Caco-2 (cell line): ENCODE measurements at regions of chr9 and their contacts with region 1.

Region 1: DNA sequence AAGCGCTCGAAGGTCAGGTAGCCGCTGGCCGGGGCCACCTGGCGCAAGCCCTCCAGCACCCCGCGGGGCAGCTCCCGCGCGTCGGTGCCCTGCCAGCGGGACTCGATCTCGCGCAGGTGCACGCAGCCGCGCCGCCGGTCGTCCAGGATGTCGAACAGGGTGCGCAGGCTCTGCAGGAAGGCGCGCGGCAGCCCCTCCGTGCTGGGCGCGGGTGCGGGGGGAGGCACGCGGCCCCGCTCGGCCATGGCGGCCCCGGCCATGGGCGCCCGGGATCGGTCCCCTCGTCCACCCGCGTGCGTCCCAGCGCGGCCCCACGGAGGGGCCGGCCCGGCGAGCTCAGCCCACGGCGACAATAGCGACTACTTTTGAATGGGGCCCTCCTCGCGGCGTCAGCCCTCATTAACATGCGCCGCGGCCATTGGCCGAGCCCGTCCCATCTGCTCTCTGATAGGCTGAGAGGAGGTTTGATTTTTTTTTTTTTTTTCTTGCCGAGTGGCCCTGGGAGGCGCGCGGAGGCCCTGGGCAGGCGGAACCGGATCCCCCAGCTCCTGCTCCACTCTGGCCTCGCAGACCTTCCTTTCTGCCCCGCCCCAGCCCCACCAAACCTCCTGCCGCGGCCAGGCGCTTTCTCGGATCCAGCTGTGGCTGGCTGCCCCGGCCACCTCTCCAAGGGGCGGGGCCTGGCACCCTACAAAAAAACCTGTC is at the start of gene SAPCD2:
- DNase-seq: peak; percentile 95
- H3K4me3 ChIP-seq: peak within 1 kb of the TSS; percentile 80
- H3K4me3 Mint-ChIP-seq: peak within 1 kb of the TSS; percentile 68
- H3K27ac Mint-ChIP-seq: peak within 1 kb of the TSS; percentile 85
- H3K4me1 ChIP-seq: peaks cover 33% of the 10 kb centered on the region
- H3K4me1 Mint-ChIP-seq: peaks cover 18% of the 10 kb centered on the region
- H3K27me3 ChIP-seq: no peaks in the 10 kb centered on the region
- H3K27me3 Mint-ChIP-seq: no peaks in the 10 kb centered on the region
- CTCF ChIP-seq: no peak
- total RNA-seq, gene SAPCD2: 53.3 and 57.5 TPM in 2 replicates

Region 2: DNA sequence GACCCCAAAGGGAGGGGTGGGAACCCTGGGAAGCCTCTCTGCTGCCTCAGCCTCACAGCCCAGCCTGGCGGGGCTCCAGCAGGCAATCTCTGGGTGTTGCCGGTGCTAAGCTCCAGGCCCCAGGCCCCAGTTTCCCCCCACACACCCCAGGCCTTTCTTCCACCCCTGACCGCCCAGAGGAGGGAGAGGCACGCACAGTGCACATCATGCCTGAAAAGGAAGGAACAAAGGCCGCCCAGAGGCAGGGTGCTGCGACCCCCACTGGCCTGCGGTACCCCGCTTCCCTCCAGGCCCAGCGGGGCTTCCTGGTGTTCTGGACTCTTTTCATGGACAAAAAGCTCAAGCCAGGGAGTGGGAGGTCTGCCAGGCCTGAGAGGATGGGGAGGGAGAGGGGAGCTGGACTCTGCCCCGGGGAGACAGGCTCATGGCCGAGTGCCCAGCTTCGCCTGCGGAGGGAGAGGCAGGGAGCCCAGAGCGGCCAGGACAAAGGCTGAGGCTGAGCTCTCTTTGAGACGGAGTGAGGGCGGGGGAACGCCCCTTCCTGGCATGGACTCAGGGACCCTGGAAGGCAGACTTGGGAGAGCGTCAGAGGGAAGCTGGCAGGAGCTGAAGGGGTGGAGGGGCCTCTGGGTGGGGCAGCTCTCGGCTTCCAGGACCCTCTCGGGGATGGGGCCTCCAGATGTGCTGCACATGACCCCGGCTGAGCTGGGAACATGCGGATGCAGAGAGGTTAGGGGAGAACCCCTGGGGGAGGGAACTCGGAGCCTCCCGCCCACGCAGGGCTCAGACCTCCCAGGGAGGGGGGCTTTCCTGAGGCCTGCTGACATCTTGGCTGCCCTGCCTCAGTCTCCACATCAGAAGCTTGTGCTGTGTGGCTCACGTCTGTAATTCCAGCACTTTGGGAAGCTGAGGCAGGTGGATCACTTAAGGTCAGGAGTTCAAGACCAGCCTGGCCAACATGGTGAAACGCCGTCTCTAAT is 14.7 kb before region 1 on chr9:
- CTCF ChIA-PET with region 1: interaction called, 24 read pairs
- POLR2A ChIA-PET with region 1: interaction called, 9 read pairs
- intact Hi-C with region 1: no loop called
- DNase-seq: no peak
- H3K4me3 ChIP-seq: no peak overlapping the region
- H3K4me3 Mint-ChIP-seq: peak overlapping the region; percentile 66
- H3K27ac Mint-ChIP-seq: no peak overlapping the region
- H3K4me1 ChIP-seq: peaks cover 18% of the 10 kb centered on the region
- H3K4me1 Mint-ChIP-seq: peaks cover 6% of the 10 kb centered on the region
- H3K27me3 ChIP-seq: no peaks in the 10 kb centered on the region
- H3K27me3 Mint-ChIP-seq: no peaks in the 10 kb centered on the region
- CTCF ChIP-seq: no peak

Region 3: GRCh38 chr9:137086531-137087408 is 16.4 kb after region 1 on chr9 and contains the start of gene MAN1B1:
- CTCF ChIA-PET with region 1: interaction called, 42 read pairs
- POLR2A ChIA-PET with region 1: interaction called, 24 read pairs
- intact Hi-C with region 1: loop called (anchors 1 kb)
- DNase-seq: peak; percentile 99
- H3K4me3 ChIP-seq: peak within 1 kb of the TSS; percentile 75
- H3K4me3 Mint-ChIP-seq: peak within 1 kb of the TSS; percentile 100
- H3K27ac Mint-ChIP-seq: peak within 1 kb of the TSS; percentile 100
- H3K4me1 ChIP-seq: peaks cover 7% of the 10 kb centered on the region
- H3K4me1 Mint-ChIP-seq: peaks cover 15% of the 10 kb centered on the region
- H3K27me3 ChIP-seq: no peaks in the 10 kb centered on the region
- H3K27me3 Mint-ChIP-seq: no peaks in the 10 kb centered on the region
- CTCF ChIP-seq: no peak
- total RNA-seq, gene MAN1B1: 57.7 and 58.0 TPM in 2 replicates